ENCODE measurements at regions of chr11 and their contacts with region 1.

Region 1: GRCh38 chr11:119666463-119667131 is 62.4 kb downstream of the NECTIN1 start:
- DNase-seq: peak; percentile 88
- H3K4me3 Mint-ChIP-seq: no peak overlapping the region
- H3K27ac Mint-ChIP-seq: no peak overlapping the region
- H3K4me1 Mint-ChIP-seq: no peaks in the 10 kb centered on the region
- H3K27me3 Mint-ChIP-seq: no peaks in the 10 kb centered on the region

Region 2: DNA sequence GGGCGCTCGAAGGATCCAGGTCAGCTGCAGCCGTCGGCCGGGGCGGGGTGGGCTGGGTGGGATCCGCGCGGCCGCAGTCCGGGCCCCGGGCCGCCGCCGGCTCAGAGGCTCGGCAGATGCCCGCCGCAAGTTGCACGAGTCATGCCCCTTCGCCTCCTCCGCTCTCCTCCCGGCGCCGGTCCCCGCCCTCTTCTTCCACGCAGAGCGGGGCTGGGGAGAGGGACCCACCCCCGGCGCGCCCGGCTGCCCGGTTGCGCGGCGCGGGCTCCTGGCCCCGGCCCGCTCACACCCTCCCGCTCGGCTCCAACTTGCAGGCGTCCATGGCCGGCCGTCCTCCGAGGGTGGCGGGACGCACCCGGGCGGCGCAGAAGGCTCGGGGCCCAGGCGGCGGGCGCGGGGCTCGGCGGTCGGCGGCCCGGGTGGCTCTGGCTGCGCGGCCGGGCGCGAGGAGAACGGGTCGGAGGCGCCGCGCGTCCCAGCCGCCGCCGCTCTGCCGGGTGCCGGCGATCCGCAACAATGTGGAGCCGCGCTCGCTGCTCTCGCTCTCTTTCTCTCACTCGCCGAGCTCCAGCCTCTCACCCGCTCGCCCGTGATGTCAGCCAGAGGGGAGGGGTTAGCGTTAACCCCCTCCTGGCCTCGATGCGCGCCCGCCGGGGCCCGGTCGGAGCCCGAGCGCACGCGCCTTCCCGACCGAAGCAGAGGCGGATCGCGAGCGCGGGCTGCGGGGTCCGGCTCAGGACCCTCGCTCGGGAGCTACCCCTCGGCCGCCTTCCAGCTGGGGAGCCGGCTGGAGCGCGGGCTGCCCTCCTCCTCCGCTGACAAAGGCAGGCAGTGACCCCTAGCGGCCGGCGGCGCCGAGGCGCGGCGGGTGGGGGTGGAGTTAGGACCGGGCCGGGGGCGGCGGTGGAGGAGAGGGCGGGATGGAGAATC is 62.3 kb after region 1 on chr11 and contains the start of gene NECTIN1:
- intact Hi-C with region 1: loop called (anchors 1 kb)
- DNase-seq: peak; percentile 96
- H3K4me3 Mint-ChIP-seq: peak within 1 kb of the TSS; percentile 85
- H3K27ac Mint-ChIP-seq: peak within 1 kb of the TSS; percentile 58
- H3K4me1 Mint-ChIP-seq: peaks cover 15% of the 10 kb centered on the region
- H3K27me3 Mint-ChIP-seq: peaks cover 73% of the 10 kb centered on the region
- total RNA-seq, gene NECTIN1: 3.1 and 5.7 TPM in 2 replicates

Region 3: GRCh38 chr11:119741369-119742262 is 75.0 kb after region 1 on chr11:
- intact Hi-C with region 1: loop called (anchors 1 kb)
- DNase-seq: peak; percentile 87
- H3K4me3 Mint-ChIP-seq: no peak overlapping the region
- H3K27ac Mint-ChIP-seq: no peak overlapping the region
- H3K4me1 Mint-ChIP-seq: peaks cover 5% of the 10 kb centered on the region
- H3K27me3 Mint-ChIP-seq: peaks cover 46% of the 10 kb centered on the region

Region 4: GRCh38 chr11:120013325-120014270 is 347.0 kb after region 1 on chr11:
- intact Hi-C with region 1: no loop called
- DNase-seq: no peak
- H3K4me3 Mint-ChIP-seq: no peak overlapping the region
- H3K27ac Mint-ChIP-seq: no peak overlapping the region
- H3K4me1 Mint-ChIP-seq: no peaks in the 10 kb centered on the region
- H3K27me3 Mint-ChIP-seq: peaks cover 34% of the 10 kb centered on the region

Region 5: GRCh38 chr11:120108154-120108865 is 441.7 kb after region 1 on chr11:
- intact Hi-C with region 1: loop called (anchors 1 kb)
- DNase-seq: peak; percentile 88
- H3K4me3 Mint-ChIP-seq: no peak overlapping the region
- H3K27ac Mint-ChIP-seq: no peak overlapping the region
- H3K4me1 Mint-ChIP-seq: no peaks in the 10 kb centered on the region
- H3K27me3 Mint-ChIP-seq: no peaks in the 10 kb centered on the region